Naive thymus-derived CD8-positive, alpha-beta T cell (primary cell): ENCODE measurements at regions of chr14 and their contacts with region 1.

Region 1: GRCh38 chr14:20413045-20413799 is at the start of gene TEP1:
- DNase-seq: peak; percentile 45 to 79 (median 64)
- ATAC-seq: peak; percentile 69 to 84
- H3K4me3 Mint-ChIP-seq: peak within 1 kb of the TSS; percentile 90 to 100 (median 96)
- H3K27ac Mint-ChIP-seq: peak within 1 kb of the TSS; percentile 84 to 99 (median 96)
- H3K4me1 Mint-ChIP-seq: peaks cover 22 to 63% (median 47%) of the 10 kb centered on the region in 4 donors
- H3K27me3 Mint-ChIP-seq: no peaks in the 10 kb centered on the region
- polyA plus RNA-seq, gene TEP1: 3.0 to 4.9 (median 4.5) TPM

Region 2: GRCh38 chr14:20427231-20428009 is 14.2 kb after region 1 on chr14:
- POLR2A ChIA-PET with region 1: interaction called, 19 read pairs
- DNase-seq: peak in 2 of 10 donors; percentile 21 to 32
- ATAC-seq: peak; percentile 38 to 62
- H3K4me3 Mint-ChIP-seq: peak overlapping the region; percentile 45 to 80 (median 79)
- H3K27ac Mint-ChIP-seq: peak overlapping the region; percentile 88 to 95 (median 93)
- H3K4me1 Mint-ChIP-seq: peaks cover 24 to 50% (median 46%) of the 10 kb centered on the region in 4 donors
- H3K27me3 Mint-ChIP-seq: no peaks in the 10 kb centered on the region

Region 3: DNA sequence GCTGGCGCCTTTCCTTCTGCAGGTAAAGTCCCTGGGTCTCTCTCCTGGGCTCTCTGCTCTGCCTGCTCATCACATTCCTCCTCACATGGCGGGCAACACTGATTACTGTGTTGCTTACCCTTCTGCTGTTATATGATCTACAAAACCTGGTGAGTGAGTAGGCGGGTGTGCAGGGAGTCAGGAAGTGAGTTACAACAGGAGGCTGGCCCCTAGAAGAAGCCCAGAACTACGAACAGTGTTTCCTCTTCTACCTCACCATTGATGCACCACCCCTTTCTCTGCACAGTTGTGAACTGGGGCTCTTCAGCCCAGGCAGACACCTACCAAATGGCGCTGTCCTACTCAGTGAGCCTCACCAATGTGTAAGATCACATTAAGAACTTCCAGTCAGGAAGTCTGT is 27.7 kb after region 1 on chr14:
- POLR2A ChIA-PET with region 1: interaction called, 24 read pairs
- DNase-seq: peak in 9 of 10 donors; percentile 12 to 79 (median 47)
- ATAC-seq: peak; percentile 96 to 98
- H3K4me3 Mint-ChIP-seq: peak overlapping the region; percentile 70 to 87 (median 82)
- H3K27ac Mint-ChIP-seq: peak overlapping the region; percentile 88 to 98 (median 94)
- H3K4me1 Mint-ChIP-seq: peaks cover 22 to 44% (median 31%) of the 10 kb centered on the region in 4 donors
- H3K27me3 Mint-ChIP-seq: no peaks in the 10 kb centered on the region